ENCODE measurements at regions of chr5 and their contacts with region 1.

Region 1: GRCh38 chr5:148179234-148179824 is 11.0 kb downstream of the SPINK14 start:
- DNase-seq: no peak
- H3K4me3 Mint-ChIP-seq: no peak overlapping the region
- H3K27ac Mint-ChIP-seq: no peak overlapping the region
- H3K4me1 Mint-ChIP-seq: no peaks in the 10 kb centered on the region
- H3K27me3 Mint-ChIP-seq: peaks cover 7% of the 10 kb centered on the region

Region 2: GRCh38 chr5:148343046-148343408 is 163.7 kb after region 1 on chr5:
- CTCF ChIA-PET with region 1: no interaction called
- POLR2A ChIA-PET with region 1: no interaction called
- intact Hi-C with region 1: no loop called
- DNase-seq: no peak
- H3K4me3 Mint-ChIP-seq: no peak overlapping the region
- H3K27ac Mint-ChIP-seq: no peak overlapping the region
- H3K4me1 Mint-ChIP-seq: no peaks in the 10 kb centered on the region
- H3K27me3 Mint-ChIP-seq: no peaks in the 10 kb centered on the region

Region 3: DNA sequence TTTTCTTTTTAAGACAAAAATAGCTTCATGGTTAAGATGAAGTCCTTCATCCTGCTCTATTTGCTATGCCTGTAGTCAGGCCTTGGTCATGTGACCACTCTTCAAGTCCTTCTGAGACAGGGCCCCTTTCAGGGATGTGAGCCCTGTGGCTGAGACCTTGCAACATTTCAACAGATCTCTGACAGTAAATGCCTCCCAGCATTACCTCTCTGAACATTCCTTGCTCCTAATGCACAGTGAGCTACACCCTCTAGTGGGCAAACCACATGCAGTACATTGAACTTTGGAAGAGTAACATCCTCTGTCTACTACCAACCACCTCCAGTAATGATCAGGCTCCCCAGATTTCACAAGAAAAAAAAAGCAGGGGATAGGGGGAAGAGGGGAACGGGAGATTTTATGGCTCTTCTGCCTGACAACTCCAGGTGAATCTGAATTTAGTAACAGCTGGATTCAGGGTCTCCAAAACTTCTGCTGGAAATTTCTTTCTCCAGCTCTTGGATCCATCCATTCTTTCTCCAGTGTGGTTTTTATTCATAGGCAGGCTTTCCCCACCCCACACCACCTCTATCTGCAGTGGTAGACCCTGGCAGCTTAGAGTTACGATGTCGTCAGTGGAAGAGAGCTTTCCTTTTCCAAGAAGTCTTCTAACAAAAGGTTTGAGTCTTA is 195.5 kb after region 1 on chr5:
- CTCF ChIA-PET with region 1: interaction called, 5 read pairs
- POLR2A ChIA-PET with region 1: no interaction called
- intact Hi-C with region 1: loop called (anchors 1 kb)
- DNase-seq: peak; percentile 11
- H3K4me3 Mint-ChIP-seq: no peak overlapping the region
- H3K27ac Mint-ChIP-seq: no peak overlapping the region
- H3K4me1 Mint-ChIP-seq: peaks cover 3% of the 10 kb centered on the region
- H3K27me3 Mint-ChIP-seq: no peaks in the 10 kb centered on the region

Region 4: DNA sequence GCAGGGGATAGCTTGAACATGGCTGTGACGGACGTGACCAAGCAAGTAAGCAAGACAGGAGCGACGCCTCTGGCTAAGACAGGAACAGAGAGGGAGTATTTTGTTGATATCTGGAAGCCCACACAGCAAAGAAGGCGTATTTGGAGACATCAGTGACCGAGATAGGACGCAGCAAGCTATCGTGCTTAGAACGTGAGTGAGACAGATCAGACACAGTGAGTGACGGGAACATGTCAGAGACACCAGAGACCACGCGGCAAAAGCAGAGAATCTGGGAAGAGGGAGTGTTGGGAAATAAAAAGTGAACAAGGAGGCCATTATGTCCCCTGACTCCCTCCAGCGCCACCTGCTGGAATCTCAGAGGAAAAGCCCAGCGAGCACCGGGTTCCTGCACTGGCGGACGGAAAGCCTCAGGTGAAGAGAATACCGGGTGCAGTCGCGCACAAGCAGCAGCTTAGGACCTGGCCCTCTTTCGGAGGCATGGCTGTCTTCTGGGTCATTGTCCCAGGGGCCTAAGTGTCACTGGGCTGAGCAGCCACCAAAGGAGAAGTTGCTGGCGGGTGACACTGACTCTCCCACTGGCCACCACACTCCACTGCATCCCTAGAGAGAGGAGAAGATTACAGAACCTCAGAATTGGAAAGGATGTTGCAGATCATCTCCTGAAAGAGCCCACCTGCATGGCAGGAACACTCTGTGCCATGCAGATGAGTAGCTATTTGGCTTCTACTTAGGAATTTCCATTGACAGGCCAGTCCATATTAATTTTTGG is 303.5 kb after region 1 on chr5:
- CTCF ChIA-PET with region 1: interaction called, 15 read pairs
- POLR2A ChIA-PET with region 1: no interaction called
- intact Hi-C with region 1: loop called (anchors 1 kb)
- DNase-seq: peak; percentile 74
- H3K4me3 Mint-ChIP-seq: no peak overlapping the region
- H3K27ac Mint-ChIP-seq: no peak overlapping the region
- H3K4me1 Mint-ChIP-seq: peaks cover 3% of the 10 kb centered on the region
- H3K27me3 Mint-ChIP-seq: peaks cover 30% of the 10 kb centered on the region

Measured in activated CD4-positive, alpha-beta memory T cell treated with anti-CD3 and anti-CD28 coated beads for 36 hours (primary cell).